Upper lobe of right lung (tissue), 1 donor: ENCODE measurements at regions of chr16 and their contacts with region 1.

Region 1: DNA sequence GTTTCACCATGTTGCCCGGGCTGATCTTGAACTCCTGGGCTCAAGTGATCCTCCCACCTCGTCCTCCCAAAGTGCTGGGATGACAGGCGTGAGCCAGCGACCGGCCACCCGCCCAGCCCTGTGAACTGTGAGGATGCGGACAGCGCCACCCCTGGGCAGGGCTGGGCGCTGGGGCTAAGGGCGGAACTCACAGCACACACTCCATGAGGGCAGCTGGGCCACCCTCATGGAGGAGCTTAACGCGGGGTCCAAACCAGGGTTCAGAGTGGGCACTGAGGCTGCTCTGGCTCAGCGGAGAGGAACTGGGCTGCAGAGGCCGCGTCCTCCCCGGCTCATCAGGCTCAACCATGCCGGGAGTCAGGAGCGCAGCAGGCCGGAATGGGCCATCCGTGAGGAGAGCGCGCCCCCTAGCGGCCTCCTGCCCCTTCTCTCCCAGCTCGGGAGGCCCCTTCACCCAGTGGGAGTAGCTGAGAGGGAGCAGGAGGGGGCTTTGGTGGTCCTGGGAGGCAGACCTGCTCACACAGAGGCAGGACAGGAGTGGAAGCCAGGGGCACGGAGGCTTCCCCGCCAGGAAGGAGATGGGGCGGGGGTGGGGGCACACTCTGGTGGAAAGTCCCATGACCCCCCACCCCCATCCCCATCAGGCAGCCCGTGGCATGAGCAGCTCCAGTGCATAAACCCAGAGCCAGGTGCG is 13.8 kb downstream of the CORO7 start:
- DNase-seq: peak; percentile 92
- ATAC-seq: peak; percentile 95
- H3K4me3 ChIP-seq: no peak overlapping the region
- H3K27ac ChIP-seq: no peak overlapping the region
- H3K4me1 ChIP-seq: peaks cover 4% of the 10 kb centered on the region
- H3K27me3 ChIP-seq: no peaks in the 10 kb centered on the region
- CTCF ChIP-seq: peak; percentile 92

Region 2: DNA sequence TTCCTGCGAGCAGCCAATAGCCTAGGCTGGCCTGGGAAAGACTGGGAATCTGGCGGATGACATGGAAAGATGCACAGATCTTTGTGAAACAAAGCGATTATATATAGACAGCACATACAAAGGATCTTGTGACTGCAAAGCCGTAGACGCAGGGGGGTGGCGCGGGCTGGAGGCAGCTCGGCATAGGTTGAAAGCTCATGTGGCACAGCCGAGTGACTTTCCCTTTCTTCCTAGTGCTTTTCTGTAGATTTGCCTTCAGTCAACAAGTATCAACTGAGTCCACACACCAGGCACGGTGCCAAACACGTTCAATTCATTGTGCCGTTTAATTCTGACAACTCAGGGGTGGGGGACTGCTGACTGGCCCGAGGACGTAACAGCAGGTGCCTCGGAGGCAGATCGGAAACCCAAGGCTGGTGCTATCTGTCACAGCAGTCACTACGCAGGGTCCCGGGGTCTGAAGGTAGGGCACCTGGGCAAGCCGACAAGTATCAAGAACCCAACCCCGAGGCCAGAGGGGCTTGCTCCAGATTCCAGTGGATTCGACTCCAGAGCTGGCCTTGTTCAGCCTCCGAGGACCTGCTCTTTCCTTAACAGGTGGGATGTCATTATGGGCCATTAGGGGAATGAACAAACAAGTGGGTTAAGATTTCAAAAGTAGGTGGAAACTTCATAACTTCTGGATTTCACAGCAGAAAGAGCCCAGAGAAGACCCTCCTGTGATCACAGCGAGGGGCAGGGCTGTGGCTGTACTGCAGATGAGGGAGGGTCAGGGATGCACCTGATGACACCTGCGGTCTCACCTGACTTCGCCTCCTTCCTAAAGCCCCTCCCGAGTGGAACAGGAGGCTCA is 57.4 kb before region 1 on chr16:
- intact Hi-C with region 1: no loop called
- DNase-seq: peak; percentile 59
- ATAC-seq: no peak
- H3K4me3 ChIP-seq: no peak overlapping the region
- H3K27ac ChIP-seq: peak overlapping the region; percentile 24
- H3K4me1 ChIP-seq: peaks cover 51% of the 10 kb centered on the region
- H3K27me3 ChIP-seq: no peaks in the 10 kb centered on the region
- CTCF ChIP-seq: no peak

Region 3: GRCh38 chr16:4358831-4359561 is 43.6 kb before region 1 on chr16:
- intact Hi-C with region 1: loop called (anchors 5 kb)
- DNase-seq: peak; percentile 87
- ATAC-seq: peak; percentile 80
- H3K4me3 ChIP-seq: no peak overlapping the region
- H3K27ac ChIP-seq: no peak overlapping the region
- H3K4me1 ChIP-seq: no peaks in the 10 kb centered on the region
- H3K27me3 ChIP-seq: no peaks in the 10 kb centered on the region
- CTCF ChIP-seq: peak; percentile 96